ENCODE measurements at regions of chr11 and their contacts with region 1.

Region 1: GRCh38 chr11:14544611-14545010 is 24.4 kb upstream of the PSMA1 start:
- DNase-seq: peak; percentile 65
- H3K4me3 Mint-ChIP-seq: peak overlapping the region; percentile 61
- H3K27ac Mint-ChIP-seq: peak overlapping the region; percentile 94
- H3K4me1 Mint-ChIP-seq: peaks cover 49% of the 10 kb centered on the region
- H3K27me3 Mint-ChIP-seq: no peaks in the 10 kb centered on the region

Region 2: GRCh38 chr11:14529933-14530332 is 14.7 kb before region 1 on chr11:
- intact Hi-C with region 1: no loop called
- DNase-seq: peak; percentile 45
- H3K4me3 Mint-ChIP-seq: no peak overlapping the region
- H3K27ac Mint-ChIP-seq: no peak overlapping the region
- H3K4me1 Mint-ChIP-seq: peaks cover 2% of the 10 kb centered on the region
- H3K27me3 Mint-ChIP-seq: no peaks in the 10 kb centered on the region

Region 3: GRCh38 chr11:14554959-14555358 is 10.3 kb after region 1 on chr11:
- intact Hi-C with region 1: loop called (anchors 1 kb)
- DNase-seq: peak; percentile 83
- H3K4me3 Mint-ChIP-seq: peak overlapping the region; percentile 51
- H3K27ac Mint-ChIP-seq: peak overlapping the region; percentile 56
- H3K4me1 Mint-ChIP-seq: peaks cover 52% of the 10 kb centered on the region
- H3K27me3 Mint-ChIP-seq: no peaks in the 10 kb centered on the region

Region 4: DNA sequence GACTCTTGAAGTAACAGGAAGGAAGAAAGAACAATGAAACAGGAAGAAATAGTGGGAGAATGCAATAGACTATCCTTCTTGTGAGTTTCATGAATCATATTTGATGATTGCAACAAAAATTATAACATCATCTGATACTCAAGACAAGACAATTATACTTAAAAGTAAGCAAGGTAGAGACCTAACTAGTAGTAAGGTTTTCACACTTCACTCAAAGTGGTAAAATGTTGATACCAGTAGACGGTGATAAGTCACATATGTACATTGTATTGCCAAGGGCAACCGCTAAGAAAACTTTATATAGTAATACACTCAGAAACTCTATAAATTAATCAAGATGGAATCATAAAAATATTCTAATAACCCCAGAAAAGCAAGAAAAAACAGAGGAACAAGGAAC is 239.6 kb after region 1 on chr11:
- intact Hi-C with region 1: loop called (anchors 5 kb)
- DNase-seq: no peak
- H3K4me3 Mint-ChIP-seq: no peak overlapping the region
- H3K27ac Mint-ChIP-seq: peak overlapping the region; percentile 84
- H3K4me1 Mint-ChIP-seq: peaks cover 37% of the 10 kb centered on the region
- H3K27me3 Mint-ChIP-seq: no peaks in the 10 kb centered on the region